OCI-LY7 (cell line): ENCODE measurements at regions of chr3 and their contacts with region 1.

Region 1: GRCh38 chr3:13301286-13301987 is 118.7 kb downstream of the NUP210 start:
- DNase-seq: no peak
- H3K4me3 ChIP-seq: no peak overlapping the region
- H3K27ac ChIP-seq: no peak overlapping the region
- H3K4me1 ChIP-seq: peaks cover 28% of the 10 kb centered on the region
- CTCF ChIP-seq: no peak

Region 2: GRCh38 chr3:12679468-12679867 is 622.0 kb before region 1 on chr3:
- CTCF ChIA-PET with region 1: no interaction called
- POLR2A ChIA-PET with region 1: no interaction called
- intact Hi-C with region 1: loop called (anchors 5 kb)
- DNase-seq: no peak
- H3K4me3 ChIP-seq: no peak overlapping the region
- H3K27ac ChIP-seq: no peak overlapping the region
- H3K4me1 ChIP-seq: no peaks in the 10 kb centered on the region
- CTCF ChIP-seq: no peak

Region 3: GRCh38 chr3:12758025-12758830 is 543.2 kb before region 1 on chr3:
- CTCF ChIA-PET with region 1: no interaction called
- POLR2A ChIA-PET with region 1: no interaction called
- intact Hi-C with region 1: no loop called
- DNase-seq: no peak
- H3K4me3 ChIP-seq: no peak overlapping the region
- H3K27ac ChIP-seq: no peak overlapping the region
- H3K4me1 ChIP-seq: peaks cover 25% of the 10 kb centered on the region
- CTCF ChIP-seq: no peak

Region 4: GRCh38 chr3:13461169-13462158 is 160.0 kb after region 1 on chr3:
- CTCF ChIA-PET with region 1: interaction called, 5 read pairs
- POLR2A ChIA-PET with region 1: no interaction called
- intact Hi-C with region 1: loop called (anchors 1 kb)
- DNase-seq: peak; percentile 91
- H3K4me3 ChIP-seq: no peak overlapping the region
- H3K27ac ChIP-seq: no peak overlapping the region
- H3K4me1 ChIP-seq: peaks cover 6% of the 10 kb centered on the region
- CTCF ChIP-seq: peak; percentile 99